ENCODE measurements at regions of chr10 and their contacts with region 1.

Region 1: GRCh38 chr10:2791774-2792443 is 275.4 kb upstream of the PFKP start:
- DNase-seq: peak; percentile 22
- H3K4me3 Mint-ChIP-seq: no peak overlapping the region
- H3K27ac Mint-ChIP-seq: peak overlapping the region; percentile 33
- H3K4me1 Mint-ChIP-seq: peaks cover 27% of the 10 kb centered on the region
- H3K27me3 Mint-ChIP-seq: peaks cover 15% of the 10 kb centered on the region

Region 2: DNA sequence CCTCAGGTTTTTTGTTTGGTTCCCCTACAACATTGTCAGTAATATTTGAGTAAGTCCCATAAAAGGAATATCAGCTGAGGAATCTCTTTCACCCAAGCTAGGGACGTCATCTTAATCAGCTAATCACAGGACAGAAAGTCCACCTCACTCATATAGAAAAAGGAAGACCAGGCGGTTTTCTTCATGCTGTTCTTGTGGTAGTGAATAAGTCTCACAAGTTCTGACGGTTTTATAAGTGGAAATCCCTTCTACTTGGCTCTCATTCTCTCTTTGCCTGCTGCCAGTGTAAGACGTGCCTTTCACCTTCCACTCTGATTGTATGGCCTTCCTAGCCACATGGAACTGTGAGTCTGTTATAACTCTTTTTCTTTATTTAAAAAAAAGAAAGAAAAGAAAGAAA is 32.7 kb before region 1 on chr10:
- intact Hi-C with region 1: loop called (anchors 5 kb)
- DNase-seq: no peak
- H3K4me3 Mint-ChIP-seq: no peak overlapping the region
- H3K27ac Mint-ChIP-seq: no peak overlapping the region
- H3K4me1 Mint-ChIP-seq: no peaks in the 10 kb centered on the region
- H3K27me3 Mint-ChIP-seq: no peaks in the 10 kb centered on the region

Region 3: GRCh38 chr10:2812631-2813030 is 20.7 kb after region 1 on chr10:
- intact Hi-C with region 1: no loop called
- DNase-seq: no peak
- H3K4me3 Mint-ChIP-seq: no peak overlapping the region
- H3K27ac Mint-ChIP-seq: no peak overlapping the region
- H3K4me1 Mint-ChIP-seq: no peaks in the 10 kb centered on the region
- H3K27me3 Mint-ChIP-seq: peaks cover 2% of the 10 kb centered on the region

Region 4: GRCh38 chr10:2897619-2898508 is 106.0 kb after region 1 on chr10:
- intact Hi-C with region 1: loop called (anchors 10 kb)
- DNase-seq: no peak
- H3K4me3 Mint-ChIP-seq: no peak overlapping the region
- H3K27ac Mint-ChIP-seq: no peak overlapping the region
- H3K4me1 Mint-ChIP-seq: peaks cover 14% of the 10 kb centered on the region
- H3K27me3 Mint-ChIP-seq: peaks cover 18% of the 10 kb centered on the region

Region 5: GRCh38 chr10:3036155-3037021 is 244.5 kb after region 1 on chr10:
- intact Hi-C with region 1: no loop called
- DNase-seq: no peak
- H3K4me3 Mint-ChIP-seq: no peak overlapping the region
- H3K27ac Mint-ChIP-seq: no peak overlapping the region
- H3K4me1 Mint-ChIP-seq: peaks cover 5% of the 10 kb centered on the region
- H3K27me3 Mint-ChIP-seq: peaks cover 20% of the 10 kb centered on the region